SK-N-SH (cell line): ENCODE measurements at regions of chr20 and their contacts with region 1.

Region 1: DNA sequence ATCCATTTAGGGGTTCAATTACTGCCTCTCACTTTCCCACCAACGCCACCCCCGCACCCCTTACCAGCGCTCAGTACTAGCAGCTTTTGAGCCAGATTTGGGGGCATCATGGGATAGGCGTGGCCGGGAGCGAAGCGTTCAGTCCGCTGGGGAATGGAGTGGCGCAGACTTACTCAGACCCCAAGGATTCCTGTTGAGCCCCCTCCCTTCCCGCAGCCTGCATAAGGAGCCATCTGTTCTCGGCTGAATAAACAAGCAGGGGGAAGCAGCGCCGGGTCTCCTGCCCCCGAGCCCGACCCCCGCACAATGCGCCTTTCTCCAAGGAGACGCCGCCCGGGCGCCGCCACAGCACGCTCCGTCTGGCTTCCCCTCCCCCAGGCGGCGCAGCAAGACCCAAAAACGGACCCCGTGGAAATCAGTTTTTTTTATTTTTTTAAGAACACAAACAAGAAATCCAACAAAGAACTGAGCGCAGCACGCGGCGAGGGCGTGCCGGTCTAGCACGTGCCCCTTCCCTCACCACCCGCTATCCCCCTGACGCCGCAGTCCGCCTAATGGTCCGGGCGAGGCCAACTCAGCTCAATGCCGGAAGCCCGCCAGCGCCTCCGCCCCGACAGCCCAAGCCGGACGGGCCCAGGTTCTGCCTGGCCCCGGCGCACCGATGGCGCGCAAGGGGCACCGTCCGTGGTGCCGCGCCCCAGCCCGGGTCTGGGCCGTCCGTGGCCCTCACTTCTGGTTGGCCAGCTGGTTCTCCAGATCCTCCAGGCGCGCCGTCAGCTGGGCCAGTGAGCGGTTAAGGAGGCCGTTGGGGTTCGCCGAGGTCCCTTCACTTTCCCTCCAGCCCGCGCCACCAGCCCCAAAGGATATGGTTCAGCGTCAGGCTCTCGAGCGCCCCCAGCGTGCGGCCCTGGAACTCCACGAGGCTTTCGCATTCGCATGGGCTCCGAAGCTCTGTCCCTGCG is 13.3 kb upstream of the RBPJL start:
- DNase-seq: peak; percentile 92
- H3K4me3 ChIP-seq: peak overlapping the region; percentile 46 to 72
- H3K27ac ChIP-seq: no peak overlapping the region
- H3K4me1 ChIP-seq: peaks cover 0 to 3% of the 10 kb centered on the region in 2 experiments; a peak in 1 of 4 replicates
- H3K27me3 ChIP-seq: no peaks in the 10 kb centered on the region
- CTCF ChIP-seq: peak; percentile 83
- EP300 ChIP-seq: no peak
- RAD21 ChIP-seq: peak; percentile 31

Region 2: GRCh38 chr20:44335675-44336440 is 957.5 kb before region 1 on chr20:
- CTCF ChIA-PET with region 1: no interaction called
- POLR2A ChIA-PET with region 1: no interaction called
- DNase-seq: peak; percentile 55
- H3K4me3 ChIP-seq: no peak overlapping the region
- H3K27ac ChIP-seq: peak overlapping the region in 1 of 2 experiments; percentile 18; a peak in 2 of 4 replicates
- H3K4me1 ChIP-seq: peaks cover 0 to 18% of the 10 kb centered on the region in 2 experiments; a peak in 1 of 4 replicates
- H3K27me3 ChIP-seq: no peaks in the 10 kb centered on the region
- CTCF ChIP-seq: no peak
- EP300 ChIP-seq: no peak
- RAD21 ChIP-seq: no peak

Region 3: DNA sequence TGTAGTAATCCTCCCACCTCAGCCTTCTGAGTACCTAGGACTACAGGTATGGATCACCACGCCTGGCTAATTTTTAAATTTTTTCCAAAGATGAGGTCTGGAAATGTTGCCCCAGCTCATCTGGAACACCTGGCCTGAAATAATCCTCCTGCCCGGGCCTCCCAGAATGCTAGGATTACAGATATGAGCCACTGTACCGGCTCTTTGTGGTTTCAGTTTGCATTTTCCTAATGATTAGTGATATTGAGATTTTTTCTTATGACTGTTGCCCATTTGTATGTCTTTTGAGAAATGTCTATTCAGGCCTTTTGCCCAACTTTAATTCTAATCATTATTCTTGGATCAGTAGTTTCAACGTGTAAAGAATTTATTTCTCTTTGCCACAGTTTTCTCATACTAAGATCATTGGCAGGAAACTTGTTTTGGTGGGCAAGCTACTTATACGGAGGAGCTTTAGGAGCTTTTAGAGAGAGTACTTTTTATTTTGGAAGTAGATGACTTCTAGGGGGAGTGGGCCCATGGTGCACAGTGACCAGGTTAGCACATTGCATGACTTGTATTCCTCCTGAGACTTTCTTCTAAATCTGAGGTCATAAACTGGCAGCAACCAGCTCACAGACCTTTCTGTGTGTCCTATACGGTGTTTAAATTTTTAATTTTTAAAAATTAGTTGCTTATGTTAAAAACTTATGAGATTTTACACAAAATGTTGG is 264.7 kb before region 1 on chr20:
- CTCF ChIA-PET with region 1: interaction called, 10 read pairs
- POLR2A ChIA-PET with region 1: no interaction called
- DNase-seq: no peak
- H3K4me3 ChIP-seq: no peak overlapping the region
- H3K27ac ChIP-seq: no peak overlapping the region
- H3K4me1 ChIP-seq: no peaks in the 10 kb centered on the region
- H3K27me3 ChIP-seq: no peaks in the 10 kb centered on the region
- CTCF ChIP-seq: no peak
- EP300 ChIP-seq: no peak
- RAD21 ChIP-seq: no peak

Region 4: DNA sequence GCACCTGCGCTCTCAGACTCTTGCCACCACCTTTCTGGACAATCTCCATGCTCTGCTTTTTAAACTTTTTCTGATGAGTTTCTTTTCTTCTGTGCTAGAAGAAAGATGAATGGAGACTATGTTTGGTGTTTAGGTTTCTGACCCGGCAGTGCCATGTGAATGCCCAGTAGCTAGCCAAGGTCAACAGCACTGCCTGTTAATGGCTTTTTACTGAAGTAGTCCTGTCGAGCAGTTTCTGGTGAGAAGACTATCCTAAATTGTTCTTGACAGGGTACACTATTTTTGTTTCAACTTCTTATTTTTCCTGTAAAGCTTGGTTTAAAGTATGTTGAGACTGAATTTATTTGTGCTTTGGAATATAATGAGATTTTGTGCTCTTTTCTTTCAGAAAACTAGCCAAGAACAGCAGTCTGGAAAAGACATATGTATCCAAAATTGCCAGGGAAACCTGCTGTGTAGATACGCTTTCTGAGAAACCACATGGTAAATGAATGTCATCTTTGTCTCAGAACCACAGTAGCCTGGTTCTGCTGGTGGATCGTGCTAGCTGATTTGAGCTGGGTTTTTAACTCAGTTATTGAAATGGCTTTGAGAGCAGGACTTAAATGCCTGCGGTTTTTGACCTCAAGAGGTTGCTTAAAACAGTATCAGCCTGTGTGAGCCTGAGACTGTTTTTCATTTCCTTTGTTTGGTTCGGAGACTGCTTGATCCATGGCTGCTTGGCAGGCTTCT is 240.5 kb before region 1 on chr20:
- CTCF ChIA-PET with region 1: interaction called, 11 read pairs
- POLR2A ChIA-PET with region 1: no interaction called
- DNase-seq: no peak
- H3K4me3 ChIP-seq: no peak overlapping the region
- H3K27ac ChIP-seq: peak overlapping the region; percentile 87 to 88
- H3K4me1 ChIP-seq: peaks cover 3 to 24% of the 10 kb centered on the region in 2 experiments; a peak in 3 of 4 replicates
- H3K27me3 ChIP-seq: no peaks in the 10 kb centered on the region
- CTCF ChIP-seq: no peak
- EP300 ChIP-seq: peak in 1 of 2 experiments; percentile 55; a peak in 1 of 4 replicates
- RAD21 ChIP-seq: no peak

Region 5: DNA sequence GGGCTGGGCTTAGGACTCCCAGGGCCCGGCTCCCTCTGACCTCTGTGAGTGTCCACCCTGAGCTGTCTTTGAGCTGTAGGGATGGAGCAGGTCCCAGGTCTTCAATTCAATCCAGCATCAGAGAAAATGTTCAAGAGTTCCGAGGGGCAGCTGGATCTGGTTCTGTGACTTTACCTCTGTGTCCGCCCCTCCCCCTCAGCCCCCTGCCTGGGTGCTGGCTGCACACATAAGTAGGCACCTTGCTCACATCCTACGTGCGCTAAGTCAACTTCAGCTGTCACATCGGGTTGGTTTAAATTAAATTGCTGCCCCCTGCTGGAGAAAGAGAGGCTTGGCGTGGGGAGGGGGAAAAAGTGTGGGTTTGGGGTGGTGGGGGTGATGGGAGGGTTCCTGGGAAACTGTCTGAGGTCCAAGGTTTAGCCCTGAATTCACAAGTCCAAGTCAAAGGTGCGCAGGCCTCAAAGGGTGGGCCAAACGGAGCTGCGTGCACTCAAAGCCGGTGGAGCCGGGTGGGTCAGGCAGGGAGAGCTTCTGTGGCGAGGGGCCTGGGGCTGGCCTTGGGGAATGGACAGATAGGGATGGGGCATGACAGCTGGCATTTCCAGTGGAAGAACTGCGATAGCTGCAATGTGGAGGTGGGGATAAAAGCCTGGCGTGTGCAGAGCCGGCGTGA is 181.4 kb before region 1 on chr20:
- CTCF ChIA-PET with region 1: interaction called, 12 read pairs
- POLR2A ChIA-PET with region 1: no interaction called
- DNase-seq: peak; percentile 59
- H3K4me3 ChIP-seq: no peak overlapping the region; a peak in 1 of 4 replicates
- H3K27ac ChIP-seq: no peak overlapping the region
- H3K4me1 ChIP-seq: no peaks in the 10 kb centered on the region
- H3K27me3 ChIP-seq: no peaks in the 10 kb centered on the region
- CTCF ChIP-seq: peak; percentile 71
- EP300 ChIP-seq: no peak
- RAD21 ChIP-seq: peak; percentile 33; the same call in 1 of the 2 replicates

Region 6: GRCh38 chr20:45209924-45210323 is 83.4 kb before region 1 on chr20:
- CTCF ChIA-PET with region 1: no interaction called
- POLR2A ChIA-PET with region 1: no interaction called
- DNase-seq: no peak
- H3K4me3 ChIP-seq: no peak overlapping the region
- H3K27ac ChIP-seq: no peak overlapping the region
- H3K4me1 ChIP-seq: no peaks in the 10 kb centered on the region
- H3K27me3 ChIP-seq: no peaks in the 10 kb centered on the region
- CTCF ChIP-seq: no peak
- EP300 ChIP-seq: no peak
- RAD21 ChIP-seq: no peak

Region 7: DNA sequence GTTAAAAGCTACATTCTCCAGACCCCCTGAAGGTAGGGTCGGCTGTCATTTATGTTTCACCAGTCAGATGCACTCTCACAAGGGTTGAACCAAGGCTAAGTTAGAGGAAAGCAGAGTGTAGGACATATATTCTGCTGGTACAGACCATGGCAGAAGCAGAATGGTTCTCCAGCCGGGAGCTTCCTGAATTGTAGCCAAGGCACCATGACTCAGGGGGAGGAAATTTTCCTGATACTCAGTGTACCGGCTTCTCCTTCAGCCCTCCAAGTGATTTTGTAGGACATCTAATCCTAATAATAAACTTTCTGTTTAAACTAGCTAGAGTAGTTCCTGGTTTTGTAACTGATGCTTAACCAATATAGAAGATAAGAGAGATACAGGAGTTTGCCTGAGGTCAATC is 24.8 kb before region 1 on chr20:
- CTCF ChIA-PET with region 1: interaction called, 48 read pairs
- POLR2A ChIA-PET with region 1: no interaction called
- DNase-seq: no peak
- H3K4me3 ChIP-seq: no peak overlapping the region
- H3K27ac ChIP-seq: no peak overlapping the region
- H3K4me1 ChIP-seq: no peaks in the 10 kb centered on the region
- H3K27me3 ChIP-seq: peaks cover 7% of the 10 kb centered on the region; the same call in 1 of the 2 replicates
- CTCF ChIP-seq: no peak
- EP300 ChIP-seq: no peak
- RAD21 ChIP-seq: no peak

Region 8: DNA sequence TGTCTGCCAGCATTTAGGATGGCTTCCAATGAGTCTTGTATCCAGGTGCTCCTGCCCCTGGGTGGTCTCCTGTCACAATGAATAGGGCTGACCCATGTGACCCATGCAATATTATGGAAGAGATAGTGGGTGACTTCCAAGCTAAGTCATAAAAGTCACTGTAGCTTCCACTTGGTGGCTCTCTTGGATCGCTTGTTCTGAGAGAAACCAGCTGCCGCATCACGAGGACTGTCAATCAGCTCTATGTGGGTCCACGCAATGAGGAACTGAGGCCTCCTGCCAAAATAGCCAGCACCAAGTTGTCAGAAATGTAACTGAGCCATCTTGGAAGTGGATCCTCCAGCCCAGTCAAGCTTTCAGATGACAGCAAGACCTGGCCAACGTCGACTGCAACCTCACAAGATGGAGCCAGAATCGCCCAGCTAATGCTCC is 29.6 kb after region 1 on chr20:
- CTCF ChIA-PET with region 1: interaction called, 54 read pairs
- POLR2A ChIA-PET with region 1: no interaction called
- DNase-seq: no peak
- H3K4me3 ChIP-seq: no peak overlapping the region
- H3K27ac ChIP-seq: no peak overlapping the region
- H3K4me1 ChIP-seq: peaks cover 0 to 8% of the 10 kb centered on the region in 2 experiments; a peak in 1 of 4 replicates
- H3K27me3 ChIP-seq: no peaks in the 10 kb centered on the region
- CTCF ChIP-seq: peak; percentile 31; the same call in 1 of the 2 replicates
- EP300 ChIP-seq: no peak
- RAD21 ChIP-seq: peak; percentile 65